ENCODE measurements at regions of chr9 and their contacts with region 1.

Region 1: GRCh38 chr9:127980706-127981558 is at the start of gene EEIG1:
- DNase-seq: peak; percentile 92 to 93
- ATAC-seq: peak; percentile 79 to 82
- H3K4me3 ChIP-seq: peak within 1 kb of the TSS; percentile 67 to 97 (median 78)
- H3K27ac ChIP-seq: peak within 1 kb of the TSS; percentile 89 to 95 (median 92)
- H3K4me1 ChIP-seq: peaks cover 44 to 50% of the 10 kb centered on the region in 2 donors
- H3K27me3 ChIP-seq: no peaks in the 10 kb centered on the region
- CTCF ChIP-seq: no peak
- POLR2A ChIP-seq: peak; percentile 93 to 95
- total RNA-seq, gene EEIG1: 1.8 to 4.5 (median 2.8) TPM

Region 2: GRCh38 chr9:127828262-127829031 is 152.5 kb before region 1 on chr9:
- in situ Hi-C with region 1: no loop called
- intact Hi-C with region 1: no loop called
- DNase-seq: peak; percentile 78 to 87
- ATAC-seq: peak; percentile 80 to 81
- H3K4me3 ChIP-seq: peak overlapping the region; percentile 29 to 44 (median 42)
- H3K27ac ChIP-seq: peak overlapping the region; percentile 64 to 84 (median 78)
- H3K4me1 ChIP-seq: peaks cover 26 to 41% of the 10 kb centered on the region in 2 donors
- H3K27me3 ChIP-seq: no peaks in the 10 kb centered on the region
- CTCF ChIP-seq: peak in 2 of 5 experiments; percentile 17 to 25
- POLR2A ChIP-seq: peak; percentile 69 to 84

Region 3: GRCh38 chr9:127968717-127969383 is 12.1 kb before region 1 on chr9:
- in situ Hi-C with region 1: no loop called
- intact Hi-C with region 1: loop called (anchors 1 kb)
- DNase-seq: peak in 1 of 2 donors; percentile 66
- ATAC-seq: peak in 1 of 2 donors; percentile 32
- H3K4me3 ChIP-seq: no peak overlapping the region
- H3K27ac ChIP-seq: peak overlapping the region; percentile 49 to 72 (median 54)
- H3K4me1 ChIP-seq: peaks cover 63 to 73% of the 10 kb centered on the region in 2 donors
- H3K27me3 ChIP-seq: no peaks in the 10 kb centered on the region
- CTCF ChIP-seq: no peak
- POLR2A ChIP-seq: no peak

Region 4: DNA sequence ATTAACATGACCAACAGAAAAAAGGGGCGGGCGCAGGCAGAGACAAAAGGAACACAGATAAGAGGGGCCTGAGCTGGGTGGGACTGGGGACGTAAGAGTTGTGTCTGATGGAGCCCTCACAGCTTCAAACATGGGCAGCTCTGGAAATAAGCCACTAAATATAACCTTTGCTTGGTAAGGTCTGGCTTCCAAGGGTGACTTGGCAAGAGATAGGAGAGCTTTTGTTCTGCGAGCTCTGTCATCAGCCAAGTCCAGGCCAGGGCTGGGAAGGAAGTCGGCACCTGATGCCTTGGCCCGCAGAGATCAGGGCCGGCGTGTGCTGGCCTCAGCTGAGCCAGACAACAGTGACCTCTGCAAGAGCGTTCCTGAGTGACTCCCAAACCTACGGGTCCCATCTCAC is 329.5 kb after region 1 on chr9:
- in situ Hi-C with region 1: no loop called
- intact Hi-C with region 1: no loop called
- DNase-seq: peak; percentile 28 to 71
- ATAC-seq: peak; percentile 70 to 91
- H3K4me3 ChIP-seq: no peak overlapping the region
- H3K27ac ChIP-seq: peak overlapping the region; percentile 31 to 76 (median 74)
- H3K4me1 ChIP-seq: peaks cover 0 to 8% of the 10 kb centered on the region in 2 donors
- H3K27me3 ChIP-seq: no peaks in the 10 kb centered on the region
- CTCF ChIP-seq: no peak
- POLR2A ChIP-seq: no peak

Measured in gastrocnemius medialis (tissue), 4 donors.